ENCODE measurements at regions of chr5 and their contacts with region 1.

Region 1: DNA sequence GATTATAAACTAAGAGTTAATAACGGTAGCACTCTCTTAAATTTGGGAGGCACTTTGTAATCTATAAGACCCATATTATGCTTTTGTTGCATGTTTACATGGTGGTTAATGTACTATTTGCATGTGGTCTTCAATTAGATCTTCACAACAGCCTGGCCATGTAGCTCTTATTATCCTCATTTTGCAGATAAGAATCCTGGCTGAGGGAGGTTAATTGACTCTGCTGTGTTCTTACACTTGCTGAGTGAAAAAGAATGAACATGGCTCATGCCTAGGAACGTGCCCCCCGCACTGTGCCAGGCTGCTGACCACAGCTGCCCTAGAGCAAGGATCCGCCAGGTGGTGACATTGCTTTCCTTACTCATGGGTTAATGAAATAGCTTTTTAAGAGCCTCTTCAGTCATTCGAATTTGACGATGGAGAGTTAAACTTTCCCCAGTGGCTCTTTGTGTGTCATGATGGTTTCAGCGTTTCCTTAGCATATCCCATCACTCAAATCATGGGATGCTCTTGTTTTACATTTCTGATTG is 97.9 kb downstream of the CDH6 start:
- DNase-seq: peak in 1 of 2 experiments; percentile 42
- H3K4me3 ChIP-seq: no peak overlapping the region
- H3K27ac ChIP-seq: no peak overlapping the region
- H3K4me1 ChIP-seq: no peaks in the 10 kb centered on the region
- H3K27me3 ChIP-seq: peaks cover 7% of the 10 kb centered on the region; the same call in 1 of the 2 replicates
- CTCF ChIP-seq: no peak

Region 2: GRCh38 chr5:31334061-31334860 is 42.9 kb after region 1 on chr5:
- CTCF ChIA-PET with region 1: no interaction called
- POLR2A ChIA-PET with region 1: no interaction called
- intact Hi-C with region 1: no loop called
- DNase-seq: no peak
- H3K4me3 ChIP-seq: no peak overlapping the region
- H3K27ac ChIP-seq: no peak overlapping the region
- H3K4me1 ChIP-seq: no peaks in the 10 kb centered on the region
- H3K27me3 ChIP-seq: peaks cover 15% of the 10 kb centered on the region
- CTCF ChIP-seq: no peak

Region 3: GRCh38 chr5:31415011-31415923 is 123.9 kb after region 1 on chr5:
- CTCF ChIA-PET with region 1: no interaction called
- POLR2A ChIA-PET with region 1: no interaction called
- intact Hi-C with region 1: loop called (anchors 2 kb)
- DNase-seq: no peak
- H3K4me3 ChIP-seq: no peak overlapping the region
- H3K27ac ChIP-seq: no peak overlapping the region
- H3K4me1 ChIP-seq: no peaks in the 10 kb centered on the region
- H3K27me3 ChIP-seq: no peaks in the 10 kb centered on the region
- CTCF ChIP-seq: peak; percentile 31; the same call in 1 of the 2 replicates

Region 4: GRCh38 chr5:31487506-31487905 is 196.1 kb after region 1 on chr5:
- CTCF ChIA-PET with region 1: no interaction called
- POLR2A ChIA-PET with region 1: no interaction called
- intact Hi-C with region 1: loop called (anchors 5 kb)
- DNase-seq: no peak
- H3K4me3 ChIP-seq: no peak overlapping the region
- H3K27ac ChIP-seq: no peak overlapping the region
- H3K4me1 ChIP-seq: no peaks in the 10 kb centered on the region
- H3K27me3 ChIP-seq: no peaks in the 10 kb centered on the region
- CTCF ChIP-seq: 0 out of 2 replicates have a peak, but pooled peaks have one; percentile 26